ENCODE measurements at regions of chr1 and their contacts with region 1.

Region 1: GRCh38 chr1:84603941-84604830 is 29.9 kb upstream of the CTBS start:
- DNase-seq: peak; percentile 52 to 83
- H3K4me3 ChIP-seq: peak overlapping the region; percentile 49 to 55
- H3K27ac ChIP-seq: peak overlapping the region; percentile 87 to 94
- H3K4me1 ChIP-seq: peaks cover 3 to 11% of the 10 kb centered on the region in 2 donors
- H3K27me3 ChIP-seq: no peaks in the 10 kb centered on the region
- CTCF ChIP-seq: peak; percentile 68 to 81 (median 77)

Region 2: GRCh38 chr1:84143796-84144565 is 460.2 kb before region 1 on chr1 and contains the start of gene PRKACB:
- intact Hi-C with region 1: loop called (anchors 5 kb)
- DNase-seq: no peak
- H3K4me3 ChIP-seq: no peak within 1 kb of the TSS
- H3K27ac ChIP-seq: no peak within 1 kb of the TSS
- H3K4me1 ChIP-seq: no peaks in the 10 kb centered on the region
- H3K27me3 ChIP-seq: no peaks in the 10 kb centered on the region
- CTCF ChIP-seq: no peak
- total RNA-seq, gene PRKACB: 23.7 TPM

Region 3: GRCh38 chr1:84442256-84442655 is 161.9 kb before region 1 on chr1:
- intact Hi-C with region 1: loop called (anchors 1 kb)
- DNase-seq: no peak
- H3K4me3 ChIP-seq: no peak overlapping the region
- H3K27ac ChIP-seq: no peak overlapping the region
- H3K4me1 ChIP-seq: no peaks in the 10 kb centered on the region
- H3K27me3 ChIP-seq: no peaks in the 10 kb centered on the region
- CTCF ChIP-seq: peak; percentile 22 to 56 (median 51)

Region 4: DNA sequence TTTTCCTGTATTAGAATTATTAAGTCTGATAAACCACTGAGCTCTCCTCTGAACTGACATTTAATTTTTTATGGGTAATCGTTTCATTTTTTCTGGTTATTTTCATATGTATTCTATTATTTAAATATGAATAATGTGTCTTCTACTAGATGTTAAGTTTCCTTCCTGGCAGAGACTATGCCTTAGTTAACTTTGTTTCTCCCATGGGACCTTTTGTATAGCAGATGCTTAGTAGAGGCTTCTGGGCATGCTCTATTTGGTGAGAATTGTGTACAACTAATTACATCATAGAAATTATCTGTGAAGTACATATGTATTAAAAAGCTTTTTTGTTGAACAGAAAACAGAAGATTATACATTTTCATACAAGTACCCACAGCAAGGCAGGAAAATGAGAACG is 53.4 kb before region 1 on chr1:
- intact Hi-C with region 1: loop called (anchors 10 kb)
- DNase-seq: no peak
- H3K4me3 ChIP-seq: no peak overlapping the region
- H3K27ac ChIP-seq: no peak overlapping the region
- H3K4me1 ChIP-seq: no peaks in the 10 kb centered on the region
- H3K27me3 ChIP-seq: no peaks in the 10 kb centered on the region
- CTCF ChIP-seq: no peak

Region 5: DNA sequence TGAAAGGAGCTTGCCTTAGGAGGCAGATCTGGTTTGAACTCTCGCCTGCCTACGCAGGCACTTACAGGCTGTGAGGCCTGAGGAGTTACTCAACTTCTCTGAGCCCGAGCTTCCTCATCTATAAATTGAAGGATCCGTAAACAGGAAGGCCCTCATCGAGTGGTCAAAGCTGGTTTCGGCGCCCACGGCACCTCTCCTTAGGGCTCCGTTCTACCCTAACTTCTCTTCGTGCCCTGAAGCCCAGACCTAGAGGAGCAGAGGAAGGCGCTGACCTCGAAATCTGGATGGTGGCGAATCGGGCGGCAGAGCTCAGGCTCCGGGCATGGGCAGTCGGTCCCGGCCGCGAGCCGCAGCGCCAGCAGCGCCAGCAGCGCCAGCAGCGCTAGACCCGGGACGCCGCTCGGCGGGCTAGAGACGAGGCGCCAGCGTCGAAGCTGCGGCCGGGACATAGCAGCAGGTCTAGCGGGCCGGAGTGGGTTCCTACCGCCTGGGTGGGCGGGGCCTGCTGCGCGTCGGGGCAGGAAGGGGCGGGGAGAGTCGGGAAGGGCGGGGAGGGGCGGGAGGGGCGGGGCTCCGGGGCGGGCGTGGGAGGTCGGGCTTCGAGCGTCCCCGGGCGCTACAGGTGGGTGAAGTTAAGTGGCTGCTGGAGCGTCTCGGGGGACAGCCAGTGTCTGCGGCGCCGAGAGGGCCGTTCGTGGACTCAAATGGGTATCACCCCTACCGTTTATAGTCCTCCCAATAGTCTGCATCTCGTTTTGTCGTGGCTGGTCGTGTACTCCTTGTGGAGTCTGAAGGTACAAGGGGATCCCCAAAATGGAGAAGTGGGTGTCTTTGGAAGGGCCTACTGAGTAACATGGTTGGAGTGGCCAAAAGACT is 30.0 kb before region 1 on chr1 and contains the start of gene CTBS:
- intact Hi-C with region 1: loop called (anchors 1 kb)
- DNase-seq: peak; percentile 33 to 91
- H3K4me3 ChIP-seq: peak within 1 kb of the TSS; percentile 87 to 89
- H3K27ac ChIP-seq: peak within 1 kb of the TSS; percentile 99 to 100
- H3K4me1 ChIP-seq: peaks cover 3 to 13% of the 10 kb centered on the region in 2 donors
- H3K27me3 ChIP-seq: no peaks in the 10 kb centered on the region
- CTCF ChIP-seq: no peak
- total RNA-seq, gene CTBS: 14.5 TPM

Measured in ascending aorta (tissue), 2 donors.